A549 (cell line): ENCODE measurements at regions of chr11 and their contacts with region 1.

Region 1: DNA sequence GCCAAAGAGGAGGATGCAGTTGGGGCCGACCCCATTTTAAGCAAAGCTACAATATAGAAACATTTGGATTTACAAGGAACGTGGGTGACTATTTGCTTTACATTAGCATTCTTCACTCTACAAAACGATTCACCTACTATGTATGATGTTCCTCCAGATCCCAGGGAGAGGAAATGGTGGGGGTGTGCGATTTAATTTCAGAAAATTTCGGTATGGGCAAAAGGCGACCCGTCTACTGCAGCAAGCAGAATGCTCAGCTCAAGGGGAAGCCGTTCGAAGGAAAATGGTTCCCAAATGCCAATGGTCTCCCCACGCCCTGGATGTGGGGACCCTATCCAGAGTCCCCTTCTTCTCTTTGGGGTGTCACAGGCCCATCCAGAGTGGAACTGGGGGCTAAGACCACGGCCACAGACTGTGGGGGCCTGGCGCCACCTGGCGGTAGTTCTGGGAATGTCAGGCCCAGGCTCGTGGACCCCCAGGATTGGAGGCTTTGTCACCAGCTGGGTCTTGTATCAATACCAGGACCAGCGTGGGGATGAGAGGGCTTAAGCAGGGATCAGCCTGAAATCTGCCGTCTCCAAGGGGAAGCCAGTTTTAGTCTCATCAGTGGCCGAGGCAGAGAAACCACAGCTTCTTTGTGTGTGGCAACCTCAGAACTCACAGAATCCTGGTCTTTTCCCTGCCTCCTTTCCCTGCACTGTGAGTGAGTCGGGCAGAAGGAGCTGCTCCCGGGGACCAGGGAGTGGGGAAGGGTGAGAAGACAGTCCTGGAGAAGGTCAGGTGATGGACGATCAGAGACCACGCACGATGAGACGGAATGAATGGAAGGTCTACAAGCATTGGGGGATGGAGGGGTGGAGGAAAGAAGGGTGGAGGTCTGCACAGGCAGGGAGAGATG is 8.4 kb downstream of the LRRC10B start:
- DNase-seq: peak; percentile 28 to 86
- ATAC-seq: peak in 1 of 2 experiments; percentile 81; a peak in 3 of 6 replicates
- H3K4me3 ChIP-seq: no peak overlapping the region
- H3K27ac ChIP-seq: no peak overlapping the region
- H3K4me1 ChIP-seq: peaks cover 6% of the 10 kb centered on the region; the same call in 1 of the 3 replicates
- CTCF ChIP-seq: peak; percentile 93
- EP300 ChIP-seq: no peak
- POLR2A ChIP-seq: no peak
- RAD21 ChIP-seq: peak; percentile 83 to 86

Region 2: DNA sequence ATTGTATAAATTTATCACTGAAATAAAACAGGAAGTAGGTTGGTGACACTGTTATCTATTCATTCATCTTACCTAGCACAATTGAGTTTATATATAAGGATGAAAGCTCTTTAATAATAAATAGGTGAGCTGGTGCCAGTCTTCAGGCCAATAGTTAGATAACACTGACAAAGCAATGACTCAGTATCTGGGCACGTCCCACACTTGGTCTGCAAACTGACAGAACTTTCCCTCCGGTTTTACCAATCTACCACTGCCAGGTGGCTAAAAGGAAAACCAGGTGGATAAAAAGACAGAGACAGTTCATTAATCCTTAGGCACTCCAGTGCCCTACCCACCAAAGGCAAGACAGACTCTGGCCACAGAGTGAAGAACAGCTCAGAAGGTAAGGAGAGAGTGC is 201.7 kb before region 1 on chr11:
- CTCF ChIA-PET with region 1: no interaction called
- POLR2A ChIA-PET with region 1: no interaction called
- DNase-seq: no peak
- ATAC-seq: no peak
- H3K4me3 ChIP-seq: no peak overlapping the region
- H3K27ac ChIP-seq: no peak overlapping the region
- H3K4me1 ChIP-seq: no peaks in the 10 kb centered on the region
- CTCF ChIP-seq: no peak
- EP300 ChIP-seq: no peak
- POLR2A ChIP-seq: no peak
- RAD21 ChIP-seq: no peak

Region 3: GRCh38 chr11:61460474-61460881 is 56.4 kb before region 1 on chr11:
- CTCF ChIA-PET with region 1: interaction called, 41 read pairs
- POLR2A ChIA-PET with region 1: no interaction called
- DNase-seq: no peak
- ATAC-seq: no peak
- H3K4me3 ChIP-seq: no peak overlapping the region
- H3K27ac ChIP-seq: no peak overlapping the region
- H3K4me1 ChIP-seq: no peaks in the 10 kb centered on the region
- CTCF ChIP-seq: no peak
- EP300 ChIP-seq: no peak
- POLR2A ChIP-seq: no peak
- RAD21 ChIP-seq: no peak

Region 4: GRCh38 chr11:61532139-61533038 is 15.5 kb after region 1 on chr11:
- CTCF ChIA-PET with region 1: interaction called, 150 read pairs
- POLR2A ChIA-PET with region 1: no interaction called
- DNase-seq: peak; percentile 49 to 87
- ATAC-seq: peak; percentile 42 to 83; a peak in 5 of 6 replicates
- H3K4me3 ChIP-seq: no peak overlapping the region
- H3K27ac ChIP-seq: peak overlapping the region in 1 of 2 experiments; percentile 56; a peak in 2 of 6 replicates
- H3K4me1 ChIP-seq: peaks cover 9% of the 10 kb centered on the region
- CTCF ChIP-seq: peak; percentile 78
- EP300 ChIP-seq: no peak
- POLR2A ChIP-seq: no peak
- RAD21 ChIP-seq: peak; percentile 38 to 44; a peak in 3 of 5 replicates

Region 5: DNA sequence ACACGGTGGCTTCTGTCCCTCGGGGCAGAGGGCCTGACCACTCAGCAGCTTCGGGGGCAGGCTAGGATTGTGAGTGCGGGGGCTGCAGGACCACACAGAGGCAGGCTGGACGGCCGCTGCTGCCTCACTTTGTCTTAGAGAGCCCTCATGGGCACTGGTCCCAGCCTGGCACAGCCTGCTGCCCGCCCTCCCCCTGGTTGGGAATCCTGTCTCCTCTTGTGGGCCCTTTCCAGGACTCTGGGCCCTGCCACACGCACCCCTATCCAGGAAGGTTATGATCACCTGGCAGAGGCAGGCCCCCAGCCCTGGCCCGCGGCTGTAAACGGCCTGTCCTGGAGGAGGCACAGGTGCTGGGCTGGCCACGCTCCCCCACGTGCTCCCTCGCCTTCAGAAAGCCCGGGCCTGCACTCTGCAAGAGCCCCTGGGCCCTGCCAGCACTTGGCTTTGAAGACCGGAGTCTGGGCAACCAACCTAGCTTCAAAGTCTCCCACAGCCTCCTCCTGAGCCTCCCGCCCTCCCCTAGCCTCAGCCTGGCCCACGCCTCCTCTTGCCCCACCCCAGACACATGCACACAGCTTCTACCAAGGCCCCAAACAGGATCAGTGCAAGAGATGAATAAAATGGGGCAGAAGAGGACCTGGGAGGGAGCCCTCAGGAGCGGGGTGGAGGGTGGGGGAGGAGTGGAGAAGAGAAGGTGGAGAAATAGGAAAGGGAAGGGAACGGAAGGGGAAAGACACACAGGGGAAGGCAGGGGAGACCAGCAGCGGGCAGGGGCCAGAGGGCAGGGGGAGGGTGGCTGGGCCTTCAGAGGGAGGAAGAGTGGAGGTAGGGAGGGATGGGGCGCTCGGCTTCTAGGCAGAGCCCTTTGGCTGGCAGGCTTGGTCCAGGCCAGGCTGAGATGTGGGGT is 33.0 kb after region 1 on chr11:
- CTCF ChIA-PET with region 1: interaction called, 17 read pairs
- POLR2A ChIA-PET with region 1: no interaction called
- DNase-seq: no peak
- ATAC-seq: 0 out of 6 replicates have a peak, but pooled peaks of 1 of the 2 experiments have one; percentile 4
- H3K4me3 ChIP-seq: no peak overlapping the region
- H3K27ac ChIP-seq: no peak overlapping the region; a peak in 1 of 6 replicates
- H3K4me1 ChIP-seq: peaks cover 10% of the 10 kb centered on the region
- CTCF ChIP-seq: no peak
- EP300 ChIP-seq: no peak
- POLR2A ChIP-seq: no peak
- RAD21 ChIP-seq: no peak

Region 6: DNA sequence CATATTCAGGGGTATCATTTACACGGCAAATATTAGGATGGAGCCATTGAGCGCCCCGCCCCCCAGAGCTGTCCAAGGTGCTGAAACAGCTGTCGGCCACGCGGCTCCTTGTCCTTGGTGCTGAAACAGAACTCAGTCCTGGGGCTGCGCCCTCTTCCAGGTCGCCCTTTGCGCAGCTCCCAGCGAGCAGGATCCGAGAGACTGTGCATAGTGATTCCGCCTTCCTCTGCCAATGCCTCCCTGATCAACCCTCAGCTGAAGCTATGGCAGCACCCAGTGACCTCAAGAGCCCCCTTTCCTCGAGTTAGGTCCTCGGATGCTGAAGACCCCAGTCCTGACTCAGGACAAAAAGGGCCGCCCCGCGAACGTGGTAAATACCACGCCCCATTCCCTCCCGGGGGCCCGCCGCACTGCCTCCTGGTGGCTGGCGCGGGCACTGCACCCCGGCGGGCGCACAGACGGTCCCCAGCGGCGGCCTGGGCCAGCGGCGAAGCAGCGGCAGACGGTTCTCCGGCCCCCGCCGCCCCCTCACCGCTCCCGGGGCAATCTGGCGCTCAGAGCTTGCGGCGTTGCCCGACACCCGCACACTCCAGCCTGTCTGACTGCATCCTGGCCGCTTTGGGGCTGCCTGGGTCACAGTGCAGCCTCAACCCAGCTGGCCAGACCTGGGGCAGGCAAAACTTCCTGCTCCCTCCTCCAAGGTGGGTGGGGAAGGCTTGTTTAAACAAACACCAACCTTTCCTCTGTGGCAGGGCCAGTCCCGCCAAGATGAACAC is 50.5 kb after region 1 on chr11:
- CTCF ChIA-PET with region 1: interaction called, 21 read pairs
- POLR2A ChIA-PET with region 1: no interaction called
- DNase-seq: peak; percentile 87 to 92
- ATAC-seq: peak; percentile 73 to 92
- H3K4me3 ChIP-seq: peak overlapping the region; percentile 31; the same call in 1 of the 3 replicates
- H3K27ac ChIP-seq: no peak overlapping the region
- H3K4me1 ChIP-seq: peaks cover 5% of the 10 kb centered on the region; the same call in 1 of the 3 replicates
- CTCF ChIP-seq: peak; percentile 72
- EP300 ChIP-seq: no peak
- POLR2A ChIP-seq: no peak
- RAD21 ChIP-seq: peak; percentile 26 to 35; a peak in 3 of 5 replicates

Region 7: DNA sequence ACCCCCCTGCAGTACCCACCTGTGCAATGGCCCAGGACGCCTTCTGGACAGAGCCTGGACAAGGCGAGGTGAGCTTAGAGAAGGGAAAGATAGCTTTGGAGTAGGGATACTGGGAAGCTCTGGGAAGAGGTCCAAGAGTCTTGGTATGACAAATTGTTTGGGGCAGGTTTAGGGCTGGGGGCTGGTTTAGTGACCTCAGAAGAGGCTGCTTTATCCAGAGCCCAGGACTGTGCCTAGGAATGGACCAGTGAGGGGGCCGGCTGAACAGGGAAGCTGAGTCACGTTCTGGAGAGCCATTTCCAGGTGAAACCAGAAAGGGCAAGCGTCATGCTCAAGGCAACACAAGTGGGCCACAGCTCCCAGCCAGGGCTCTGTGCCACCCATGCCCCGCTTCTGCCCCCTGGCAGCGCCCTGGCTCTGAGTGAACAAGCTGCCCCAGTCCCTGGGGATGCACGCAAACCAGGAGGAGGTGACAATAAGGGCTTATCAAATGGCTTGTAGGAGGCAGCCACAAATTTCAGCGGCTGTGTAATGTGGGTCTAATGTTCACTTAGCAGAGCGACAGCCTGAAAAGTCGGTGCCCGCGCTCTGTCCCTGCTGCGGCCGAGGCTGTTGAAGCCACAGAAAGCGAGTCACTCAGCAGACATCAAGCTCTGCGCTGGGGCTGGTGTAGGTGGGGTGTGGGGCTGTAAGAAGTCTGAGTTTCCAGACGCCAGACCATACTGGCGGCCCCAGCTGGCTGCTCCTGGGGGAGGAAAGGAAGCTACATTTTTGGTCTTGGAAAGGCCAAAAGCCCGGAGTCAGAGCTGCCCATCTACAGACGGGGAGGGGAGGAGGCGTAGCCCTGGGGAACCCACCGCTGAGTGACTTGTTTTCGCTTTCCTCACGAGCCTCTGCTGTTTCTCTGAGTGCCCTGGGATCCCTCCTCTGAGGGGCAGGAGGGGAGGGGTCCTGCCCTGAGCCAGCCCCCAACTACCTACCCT is 82.3 kb after region 1 on chr11:
- CTCF ChIA-PET with region 1: no interaction called
- POLR2A ChIA-PET with region 1: no interaction called
- DNase-seq: no peak
- ATAC-seq: peak in 1 of 2 experiments; percentile 18; a peak in 3 of 6 replicates
- H3K4me3 ChIP-seq: no peak overlapping the region
- H3K27ac ChIP-seq: no peak overlapping the region
- H3K4me1 ChIP-seq: no peaks in the 10 kb centered on the region
- CTCF ChIP-seq: no peak
- EP300 ChIP-seq: no peak
- POLR2A ChIP-seq: no peak
- RAD21 ChIP-seq: no peak